SK-N-SH (cell line): ENCODE measurements at regions of chr1 and their contacts with region 1.

Region 1: GRCh38 chr1:181166377-181167196 is 78.1 kb downstream of the IER5 start:
- DNase-seq: peak; percentile 78
- H3K4me3 ChIP-seq: no peak overlapping the region; a peak in 1 of 4 replicates
- H3K27ac ChIP-seq: no peak overlapping the region
- H3K4me1 ChIP-seq: peaks cover 0 to 2% of the 10 kb centered on the region in 2 experiments; a peak in 1 of 4 replicates
- H3K27me3 ChIP-seq: no peaks in the 10 kb centered on the region; the same call in 1 of the 2 replicates
- CTCF ChIP-seq: peak; percentile 85
- EP300 ChIP-seq: no peak
- RAD21 ChIP-seq: peak; percentile 98

Region 2: DNA sequence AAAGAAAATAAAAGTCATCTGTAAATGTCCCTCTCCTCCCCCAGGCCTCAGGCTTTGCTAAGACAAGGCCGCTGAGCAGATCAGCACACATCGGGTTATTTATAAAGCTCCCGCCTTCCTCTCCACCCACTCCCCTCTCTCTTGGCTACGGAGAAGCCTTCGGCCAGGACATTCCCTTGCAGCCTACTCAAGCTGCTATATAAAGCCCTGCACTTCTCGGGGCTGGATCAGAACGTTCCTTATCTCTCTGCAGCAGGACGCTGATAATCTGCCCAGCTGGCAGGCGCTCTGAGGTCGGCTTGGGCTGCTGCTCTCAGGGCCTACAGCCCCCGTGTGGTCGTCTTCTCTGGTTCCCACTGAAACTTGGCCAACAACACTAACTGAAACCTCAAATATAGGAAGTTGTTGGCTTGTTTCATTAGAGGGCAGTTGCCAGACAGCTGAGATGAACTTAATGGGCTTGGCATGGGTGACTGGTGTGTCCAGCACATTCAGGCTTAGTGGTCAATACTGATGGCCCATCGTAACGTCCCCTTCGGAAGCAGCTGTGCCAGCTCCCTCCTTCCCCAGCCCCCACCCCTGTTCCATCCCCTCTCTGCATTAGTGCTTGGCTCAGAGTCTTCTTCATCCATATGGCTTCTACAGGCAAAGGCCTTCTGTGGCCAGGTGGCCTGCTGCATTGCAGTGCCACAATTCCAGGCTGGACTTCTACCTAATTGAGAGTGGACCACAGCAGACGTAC is 13.5 kb before region 1 on chr1:
- CTCF ChIA-PET with region 1: interaction called, 12 read pairs
- POLR2A ChIA-PET with region 1: no interaction called
- DNase-seq: peak; percentile 68
- H3K4me3 ChIP-seq: no peak overlapping the region; a peak in 1 of 4 replicates
- H3K27ac ChIP-seq: peak overlapping the region in 1 of 2 experiments; percentile 4; a peak in 2 of 4 replicates
- H3K4me1 ChIP-seq: peaks cover 4 to 20% of the 10 kb centered on the region in 2 experiments; a peak in 2 of 4 replicates
- H3K27me3 ChIP-seq: no peaks in the 10 kb centered on the region
- CTCF ChIP-seq: peak; percentile 15; the same call in 1 of the 2 replicates
- EP300 ChIP-seq: no peak
- RAD21 ChIP-seq: peak; percentile 40